Ascending aorta (tissue), 2 donors: ENCODE measurements at regions of chr12 and their contacts with region 1.

Region 1: GRCh38 chr12:118016424-118017264 is at the start of gene RFC5:
- DNase-seq: peak; percentile 86 to 98
- H3K4me3 ChIP-seq: peak within 1 kb of the TSS; percentile 67 to 84
- H3K27ac ChIP-seq: peak within 1 kb of the TSS in 1 of 2 donors; percentile 22
- H3K4me1 ChIP-seq: peaks cover 0 to 4% of the 10 kb centered on the region in 2 donors
- H3K27me3 ChIP-seq: no peaks in the 10 kb centered on the region
- CTCF ChIP-seq: no peak
- total RNA-seq, gene RFC5: 5.2 TPM

Region 2: GRCh38 chr12:118052324-118053070 is 35.9 kb after region 1 on chr12:
- intact Hi-C with region 1: loop called (anchors 2 kb)
- DNase-seq: peak; percentile 28 to 92
- H3K4me3 ChIP-seq: no peak overlapping the region
- H3K27ac ChIP-seq: peak overlapping the region; percentile 81 to 83
- H3K4me1 ChIP-seq: peaks cover 13 to 31% of the 10 kb centered on the region in 2 donors
- H3K27me3 ChIP-seq: no peaks in the 10 kb centered on the region
- CTCF ChIP-seq: no peak

Region 3: GRCh38 chr12:118061011-118061875 is 44.6 kb after region 1 on chr12 and contains the start of gene WSB2:
- intact Hi-C with region 1: loop called (anchors 2 kb)
- DNase-seq: peak in 1 of 2 donors; percentile 88
- H3K4me3 ChIP-seq: peak within 1 kb of the TSS; percentile 75 to 86
- H3K27ac ChIP-seq: peak within 1 kb of the TSS; percentile 95 to 99
- H3K4me1 ChIP-seq: peaks cover 0 to 8% of the 10 kb centered on the region in 2 donors
- H3K27me3 ChIP-seq: no peaks in the 10 kb centered on the region
- CTCF ChIP-seq: no peak
- total RNA-seq, gene WSB2: 68.6 TPM

Region 4: DNA sequence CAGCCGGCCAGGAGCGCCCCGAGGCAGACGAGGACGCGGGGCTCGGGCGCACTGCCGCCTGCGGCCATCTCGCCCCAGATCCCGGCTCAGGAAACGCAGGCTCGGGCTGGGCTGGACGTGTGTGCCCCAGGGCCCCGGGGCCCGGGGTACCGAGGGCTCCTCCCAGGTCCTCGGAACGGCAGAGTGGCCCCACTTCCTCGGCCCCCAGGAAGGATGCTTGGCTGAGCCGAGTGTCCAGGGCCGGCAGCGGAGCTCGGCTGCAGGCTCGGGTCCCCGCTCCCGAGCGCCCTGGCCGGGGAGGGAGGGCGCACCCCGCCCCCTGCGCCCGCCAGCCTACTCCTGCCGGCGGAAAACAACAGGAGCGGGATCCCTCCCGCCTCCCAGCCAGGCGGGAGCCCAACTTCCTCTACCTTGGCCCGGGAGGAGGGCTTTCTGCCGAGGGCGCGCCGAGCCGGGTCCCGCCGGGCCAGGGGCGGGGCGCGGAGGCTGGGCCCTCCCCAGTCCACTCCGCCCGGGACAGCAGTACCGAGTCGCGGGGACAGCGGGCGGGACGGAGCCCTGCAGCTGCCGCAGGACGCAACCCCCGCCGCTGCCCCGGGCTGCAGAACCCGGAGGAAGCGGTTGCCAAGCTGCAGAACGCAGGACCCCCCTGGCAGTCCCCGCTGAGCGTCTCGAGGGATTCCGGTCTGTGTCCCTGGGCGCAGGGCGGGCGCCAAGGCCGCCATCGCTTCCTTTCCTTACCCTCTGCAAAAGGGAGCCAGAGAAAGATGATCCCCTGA is 87.1 kb after region 1 on chr12 and contains the start of gene VSIG10:
- intact Hi-C with region 1: loop called (anchors 5 kb)
- DNase-seq: peak; percentile 9 to 80
- H3K4me3 ChIP-seq: peak within 1 kb of the TSS; percentile 74 to 96
- H3K27ac ChIP-seq: peak within 1 kb of the TSS; percentile 70 to 74
- H3K4me1 ChIP-seq: no peaks in the 10 kb centered on the region
- H3K27me3 ChIP-seq: no peaks in the 10 kb centered on the region
- CTCF ChIP-seq: no peak
- total RNA-seq, gene VSIG10: 38.3 TPM

Region 5: DNA sequence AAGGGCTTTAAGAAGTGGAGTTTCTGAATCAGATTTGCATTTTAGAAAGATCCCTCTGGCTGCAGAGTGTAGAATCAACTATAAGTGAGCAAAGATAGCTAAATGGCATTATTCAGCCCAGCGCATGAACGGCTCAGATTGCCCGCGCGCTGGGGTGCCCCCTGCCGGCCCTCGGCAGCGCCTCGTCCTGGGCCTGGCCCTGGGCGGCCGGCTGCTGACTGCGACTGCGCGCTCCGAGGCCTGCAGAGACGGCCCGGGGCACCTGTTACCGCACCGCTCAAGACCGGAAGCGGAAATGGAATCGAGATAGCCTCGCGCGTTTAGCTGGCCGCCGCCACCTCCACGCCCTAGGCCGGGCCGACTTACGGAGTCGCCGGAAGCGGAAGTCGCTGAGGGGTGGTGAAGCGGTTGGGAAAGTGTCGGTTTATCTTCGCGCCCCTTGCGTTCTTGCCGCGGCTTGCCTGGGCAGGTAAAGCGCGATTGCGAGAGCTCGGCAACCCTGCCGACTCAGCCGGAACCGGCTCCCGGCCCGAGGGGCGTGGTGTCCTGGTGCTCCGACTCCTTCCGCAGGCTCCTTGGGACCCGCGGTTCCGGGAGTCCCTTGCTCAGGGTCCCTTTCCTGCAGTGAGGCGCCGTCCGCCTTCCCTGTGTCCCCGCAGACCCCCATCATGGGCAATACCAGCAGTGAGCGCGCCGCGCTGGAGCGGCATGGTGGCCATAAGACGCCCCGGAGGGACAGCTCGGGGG is 1651.1 kb after region 1 on chr12 and contains the start of gene PRKAB1:
- intact Hi-C with region 1: loop called (anchors 10 kb)
- DNase-seq: peak; percentile 83 to 97
- H3K4me3 ChIP-seq: peak within 1 kb of the TSS; percentile 81 to 90
- H3K27ac ChIP-seq: peak within 1 kb of the TSS; percentile 93 to 97
- H3K4me1 ChIP-seq: peaks cover 0 to 22% of the 10 kb centered on the region in 2 donors
- H3K27me3 ChIP-seq: no peaks in the 10 kb centered on the region
- CTCF ChIP-seq: peak; percentile 86 to 96 (median 88)
- total RNA-seq, gene PRKAB1: 41.2 TPM